MCF 10A (cell line): ENCODE measurements at regions of chr1 and their contacts with region 1.

Region 1: GRCh38 chr1:19074902-19075721 is 118.6 kb upstream of the IFFO2 start:
- DNase-seq: peak; percentile 91
- H3K4me3 Mint-ChIP-seq: peak overlapping the region; percentile 11
- H3K27ac Mint-ChIP-seq: peak overlapping the region; percentile 90
- H3K4me1 Mint-ChIP-seq: peaks cover 21% of the 10 kb centered on the region
- H3K27me3 Mint-ChIP-seq: no peaks in the 10 kb centered on the region
- CTCF ChIP-seq: no peak

Region 2: DNA sequence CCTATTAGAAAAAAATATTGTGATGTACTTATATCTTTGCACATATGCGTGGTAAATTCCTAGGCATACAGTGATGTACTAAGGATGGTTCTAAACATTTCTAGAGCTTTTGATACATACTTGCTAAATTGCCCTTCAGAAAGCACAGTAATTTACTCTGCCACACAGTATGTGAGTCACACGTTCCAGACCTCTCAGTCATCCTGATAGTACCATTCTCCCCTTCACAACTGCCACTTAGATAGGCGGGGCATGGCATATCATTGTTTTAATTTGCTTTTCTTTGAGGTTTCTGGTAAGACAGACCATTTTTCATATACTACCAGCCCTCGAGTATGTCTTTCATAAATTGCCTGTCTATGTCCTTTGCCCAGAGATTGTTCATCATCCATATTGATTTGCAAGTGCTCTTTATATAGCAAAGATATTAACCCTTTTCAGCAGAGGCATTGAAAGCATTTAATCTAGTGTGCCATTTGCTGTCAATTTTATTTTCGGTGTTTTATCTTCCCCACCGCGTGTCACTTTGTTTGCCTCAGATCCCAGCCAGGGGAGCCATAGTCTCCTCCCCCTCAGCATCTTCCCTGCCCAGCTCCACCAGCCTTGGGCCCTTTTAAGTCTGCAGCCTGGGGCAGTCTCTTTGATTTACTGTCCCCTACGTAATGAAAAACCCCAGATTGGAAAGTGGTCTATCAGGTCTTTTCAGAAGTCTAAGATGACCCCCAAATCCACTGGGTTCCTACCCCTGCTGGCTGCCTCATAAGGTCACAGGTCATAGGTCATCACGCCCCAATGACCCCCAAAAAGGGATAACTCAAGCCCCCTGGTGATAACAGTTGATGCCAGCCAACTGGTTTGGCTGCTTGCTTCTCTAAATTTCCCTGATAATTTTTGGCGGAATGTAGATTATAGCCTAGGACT is 456.3 kb before region 1 on chr1:
- CTCF ChIA-PET with region 1: no interaction called
- POLR2A ChIA-PET with region 1: no interaction called
- intact Hi-C with region 1: no loop called
- DNase-seq: peak; percentile 57
- H3K4me3 Mint-ChIP-seq: no peak overlapping the region
- H3K27ac Mint-ChIP-seq: no peak overlapping the region
- H3K4me1 Mint-ChIP-seq: peaks cover 11% of the 10 kb centered on the region
- H3K27me3 Mint-ChIP-seq: peaks cover 12% of the 10 kb centered on the region
- CTCF ChIP-seq: no peak

Region 3: DNA sequence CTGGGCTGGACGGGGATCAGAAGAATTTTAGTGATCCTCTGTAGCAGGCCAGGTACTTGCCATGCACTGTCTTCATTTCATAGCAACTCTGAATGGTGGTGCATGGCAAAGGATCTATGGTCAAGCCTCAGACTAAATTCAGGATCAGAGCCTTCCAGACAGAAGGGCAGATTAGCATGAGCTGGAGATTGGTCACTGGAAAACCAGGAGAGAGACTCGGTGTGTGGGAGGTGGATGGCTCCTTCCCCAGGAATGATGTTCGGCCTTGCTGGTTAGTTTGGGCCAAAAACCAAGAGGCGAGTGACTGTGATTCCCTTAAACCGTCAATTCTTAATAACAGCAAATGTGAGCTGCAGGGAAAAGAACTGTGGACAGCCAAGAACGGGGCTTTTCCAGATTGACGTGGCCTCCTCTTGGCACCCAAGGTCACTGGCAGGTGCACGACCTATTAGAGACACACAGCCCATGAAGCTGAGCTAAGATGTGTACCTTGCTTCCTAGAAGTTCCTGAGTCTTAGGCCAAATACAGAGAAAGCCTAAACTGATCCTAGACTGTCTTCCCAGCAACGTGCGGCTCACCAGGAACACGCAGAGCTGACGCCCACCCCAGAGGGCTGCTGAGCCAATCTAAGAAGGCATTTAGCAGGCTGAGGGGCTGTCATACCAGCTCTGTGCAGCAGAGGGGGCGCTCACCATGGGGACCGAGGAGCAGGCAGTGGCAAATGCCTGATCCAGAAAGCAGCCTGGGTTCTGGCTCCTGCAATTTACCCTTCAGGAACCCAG is 191.3 kb before region 1 on chr1:
- CTCF ChIA-PET with region 1: interaction called, 11 read pairs
- POLR2A ChIA-PET with region 1: no interaction called
- intact Hi-C with region 1: no loop called
- DNase-seq: peak; percentile 65
- H3K4me3 Mint-ChIP-seq: no peak overlapping the region
- H3K27ac Mint-ChIP-seq: no peak overlapping the region
- H3K4me1 Mint-ChIP-seq: peaks cover 5% of the 10 kb centered on the region
- H3K27me3 Mint-ChIP-seq: no peaks in the 10 kb centered on the region
- CTCF ChIP-seq: peak; percentile 86

Region 4: GRCh38 chr1:18926315-18927081 is 148.6 kb before region 1 on chr1:
- CTCF ChIA-PET with region 1: interaction called, 6 read pairs
- POLR2A ChIA-PET with region 1: interaction called, 12 read pairs
- intact Hi-C with region 1: no loop called
- DNase-seq: peak; percentile 87
- H3K4me3 Mint-ChIP-seq: peak overlapping the region; percentile 44
- H3K27ac Mint-ChIP-seq: peak overlapping the region; percentile 75
- H3K4me1 Mint-ChIP-seq: peaks cover 27% of the 10 kb centered on the region
- H3K27me3 Mint-ChIP-seq: no peaks in the 10 kb centered on the region
- CTCF ChIP-seq: no peak

Region 5: DNA sequence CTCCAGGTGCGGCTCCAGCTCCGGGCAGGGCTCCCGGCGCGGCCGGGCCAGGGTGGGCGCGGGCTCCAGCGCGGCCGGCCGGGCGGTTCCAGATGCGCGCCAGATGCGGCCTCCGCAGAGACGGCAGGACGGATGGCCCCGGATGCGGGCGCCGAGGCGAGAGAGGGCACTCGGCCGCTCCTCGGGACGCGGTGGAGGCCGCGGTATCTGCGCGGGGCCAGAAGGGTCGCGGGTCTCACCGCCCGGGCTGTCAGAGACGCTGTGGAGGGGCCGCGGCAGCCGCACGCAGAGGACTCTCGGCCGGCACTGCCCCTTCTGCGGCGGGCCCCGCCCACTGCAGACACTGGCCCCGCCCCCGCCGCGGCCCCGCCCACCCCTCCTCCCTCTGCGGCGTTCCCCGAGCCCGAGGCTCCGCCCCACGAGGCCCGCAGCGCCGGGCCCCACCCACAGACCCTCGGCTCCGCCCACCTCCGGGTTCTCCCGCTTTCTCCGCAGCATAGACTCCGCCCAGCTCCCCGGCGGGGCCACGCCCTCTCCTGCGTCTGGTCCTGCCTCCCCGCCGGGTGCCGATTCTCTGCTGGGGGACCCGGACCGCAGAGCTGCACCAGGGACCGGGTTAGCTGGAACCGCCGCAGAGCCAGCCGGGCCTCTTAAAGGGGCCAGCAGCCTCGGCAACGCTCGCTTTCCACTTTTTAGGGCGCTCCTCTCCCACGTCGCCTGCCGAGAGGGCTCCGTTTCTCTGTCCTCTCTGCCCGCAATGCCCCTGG is 118.6 kb before region 1 on chr1 and contains the start of gene IFFO2:
- CTCF ChIA-PET with region 1: interaction called, 10 read pairs
- POLR2A ChIA-PET with region 1: interaction called, 74 read pairs
- intact Hi-C with region 1: loop called (anchors 2 kb)
- DNase-seq: peak; percentile 91
- H3K4me3 Mint-ChIP-seq: peak within 1 kb of the TSS; percentile 74
- H3K27ac Mint-ChIP-seq: no peak within 1 kb of the TSS
- H3K4me1 Mint-ChIP-seq: peaks cover 19% of the 10 kb centered on the region
- H3K27me3 Mint-ChIP-seq: peaks cover 10% of the 10 kb centered on the region
- CTCF ChIP-seq: no peak
- total RNA-seq, gene IFFO2: 10.8 and 21.0 TPM in 2 replicates

Region 6: DNA sequence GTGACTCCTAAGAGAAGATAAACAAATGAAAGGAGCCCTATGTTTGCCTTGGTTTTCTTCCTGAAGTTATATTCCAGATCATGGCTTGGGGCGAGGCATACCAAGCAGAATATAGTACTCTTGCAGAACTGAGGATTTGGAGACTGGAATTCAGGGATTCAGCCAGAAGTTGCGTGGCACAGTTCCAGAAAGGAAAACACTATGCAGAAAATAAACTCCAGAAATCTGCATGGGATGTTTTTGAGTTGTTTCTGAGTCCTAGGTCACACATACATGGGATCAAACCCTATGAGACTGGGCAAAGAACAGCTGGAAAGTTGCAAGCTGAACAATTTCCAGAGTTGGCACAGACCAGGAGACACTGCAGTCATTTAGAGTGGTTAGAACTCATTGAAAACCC is 75.8 kb before region 1 on chr1:
- CTCF ChIA-PET with region 1: no interaction called
- POLR2A ChIA-PET with region 1: interaction called, 18 read pairs
- intact Hi-C with region 1: no loop called
- DNase-seq: no peak
- H3K4me3 Mint-ChIP-seq: no peak overlapping the region
- H3K27ac Mint-ChIP-seq: no peak overlapping the region
- H3K4me1 Mint-ChIP-seq: peaks cover 11% of the 10 kb centered on the region
- H3K27me3 Mint-ChIP-seq: no peaks in the 10 kb centered on the region
- CTCF ChIP-seq: no peak